BJ (cell line): ENCODE measurements at regions of chr1 and their contacts with region 1.

Region 1: DNA sequence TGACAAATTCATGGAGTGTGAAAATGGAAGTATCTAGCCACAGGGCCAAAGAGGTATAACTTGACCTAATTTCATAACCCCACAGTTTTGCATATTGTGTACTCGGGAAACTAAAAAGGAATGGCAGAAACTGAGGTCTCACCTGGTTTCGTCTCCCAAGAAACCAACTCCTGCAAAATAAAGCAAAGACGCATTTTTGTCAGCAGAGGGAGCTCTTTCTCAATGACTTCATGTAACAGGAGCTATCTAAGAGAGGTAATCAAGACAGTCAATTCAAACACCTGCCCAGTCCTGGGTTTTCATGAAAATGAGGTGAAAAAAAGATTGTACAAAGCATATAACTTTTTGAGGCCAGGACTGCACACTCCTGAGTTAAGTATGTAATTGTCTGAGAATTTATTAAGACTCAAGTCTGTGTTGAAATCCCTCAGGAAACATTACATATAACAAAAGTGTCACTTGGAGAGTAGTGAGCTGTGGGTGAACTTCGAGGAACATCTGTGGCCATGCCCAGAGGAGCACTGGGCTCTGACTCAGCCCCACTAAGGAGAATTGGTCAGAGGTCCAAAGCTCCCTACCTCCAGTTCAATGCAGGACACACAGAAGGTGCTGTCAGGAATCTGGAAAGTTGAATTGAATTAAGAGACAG is 17.6 kb downstream of the FCRL4 start:
- DNase-seq: peak; percentile 3
- H3K4me3 ChIP-seq: no peak overlapping the region
- H3K27me3 ChIP-seq: no peaks in the 10 kb centered on the region
- CTCF ChIP-seq: peak; percentile 65

Region 2: DNA sequence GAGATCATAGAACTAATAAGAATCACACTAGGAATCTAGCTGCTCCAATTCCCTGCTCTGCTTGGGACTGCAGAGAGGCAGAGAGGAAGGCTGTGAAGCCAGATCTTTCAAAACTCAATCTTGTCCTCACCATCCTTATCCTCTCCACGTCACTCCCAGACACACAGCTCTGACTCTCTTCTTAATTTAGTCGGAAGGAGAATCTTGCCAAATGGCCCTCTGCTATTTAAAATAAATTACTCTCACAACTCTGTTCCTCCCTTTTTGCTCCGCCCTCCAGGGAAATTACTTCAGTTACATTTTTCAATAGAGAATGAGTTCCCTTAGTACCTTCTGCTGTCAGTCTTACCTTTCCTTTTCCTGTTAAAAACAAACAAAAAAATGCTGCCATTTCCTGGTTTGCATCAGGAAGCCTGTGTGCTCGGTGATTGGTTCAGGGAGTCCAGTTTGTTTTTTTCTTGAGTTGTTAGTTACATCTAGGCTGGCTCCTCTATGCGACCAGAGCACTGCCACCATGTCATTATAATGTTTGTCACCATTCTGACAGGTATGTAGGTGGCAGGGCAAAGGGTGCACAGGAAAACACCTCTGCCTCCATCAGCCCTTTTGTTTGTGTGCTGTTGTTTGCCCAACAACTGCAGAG is 108.1 kb before region 1 on chr1:
- CTCF ChIA-PET with region 1: no interaction called
- POLR2A ChIA-PET with region 1: no interaction called
- DNase-seq: no peak
- H3K4me3 ChIP-seq: no peak overlapping the region
- H3K27me3 ChIP-seq: no peaks in the 10 kb centered on the region
- CTCF ChIP-seq: no peak

Region 3: GRCh38 chr1:157566484-157567300 is 13.6 kb before region 1 on chr1:
- CTCF ChIA-PET with region 1: interaction called, 14 read pairs
- POLR2A ChIA-PET with region 1: no interaction called
- DNase-seq: no peak
- H3K4me3 ChIP-seq: no peak overlapping the region
- H3K27me3 ChIP-seq: no peaks in the 10 kb centered on the region
- CTCF ChIP-seq: no peak

Region 4: DNA sequence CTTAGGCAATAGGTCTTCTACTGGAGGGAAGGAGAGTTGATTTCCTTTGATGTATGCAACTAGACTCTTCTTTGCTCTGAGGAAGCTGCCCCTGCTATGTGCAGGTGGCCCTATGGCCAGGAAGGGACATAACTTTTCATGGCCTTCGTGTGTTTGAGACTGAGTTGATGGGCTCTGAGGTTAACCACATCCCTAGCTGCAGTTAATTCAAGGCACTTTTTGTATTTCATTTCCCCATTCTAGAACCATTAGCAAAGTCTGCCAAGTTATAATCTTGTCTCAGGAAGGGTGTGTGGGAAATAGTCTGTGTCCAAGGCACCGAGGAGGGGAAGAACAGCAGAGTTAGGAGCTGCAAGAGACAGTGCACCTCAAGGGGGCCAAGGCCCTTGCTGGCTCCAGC is 15.1 kb after region 1 on chr1:
- CTCF ChIA-PET with region 1: interaction called, 11 read pairs
- POLR2A ChIA-PET with region 1: no interaction called
- DNase-seq: no peak
- H3K4me3 ChIP-seq: no peak overlapping the region
- H3K27me3 ChIP-seq: no peaks in the 10 kb centered on the region
- CTCF ChIP-seq: no peak

Region 5: GRCh38 chr1:157704878-157705277 is 124.6 kb after region 1 on chr1:
- CTCF ChIA-PET with region 1: no interaction called
- POLR2A ChIA-PET with region 1: no interaction called
- DNase-seq: no peak
- H3K4me3 ChIP-seq: no peak overlapping the region
- H3K27me3 ChIP-seq: peaks cover 3% of the 10 kb centered on the region; the same call in 1 of the 2 replicates
- CTCF ChIP-seq: no peak

Region 6: DNA sequence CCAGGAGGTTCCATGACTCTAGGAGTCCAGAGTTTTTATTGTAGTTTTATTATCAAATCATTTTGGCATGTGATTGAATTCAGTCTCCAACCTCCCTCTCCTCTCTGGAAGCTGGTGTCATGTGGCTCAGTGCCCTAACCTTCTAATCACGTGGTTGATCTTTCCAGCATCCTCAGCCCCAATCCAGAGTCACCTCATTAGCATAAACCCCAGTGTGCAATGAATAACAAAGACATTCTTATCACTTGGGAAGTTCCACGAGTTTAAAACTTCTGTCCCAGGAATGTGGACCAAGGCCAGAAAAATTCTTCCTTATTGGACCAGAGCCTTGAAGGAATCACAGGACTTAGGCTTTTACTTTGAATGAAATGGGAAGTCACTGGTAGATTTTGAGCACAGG is 465.3 kb after region 1 on chr1:
- CTCF ChIA-PET with region 1: no interaction called
- POLR2A ChIA-PET with region 1: no interaction called
- DNase-seq: peak; percentile 50
- H3K4me3 ChIP-seq: no peak overlapping the region
- H3K27me3 ChIP-seq: no peaks in the 10 kb centered on the region
- CTCF ChIP-seq: no peak

Region 7: DNA sequence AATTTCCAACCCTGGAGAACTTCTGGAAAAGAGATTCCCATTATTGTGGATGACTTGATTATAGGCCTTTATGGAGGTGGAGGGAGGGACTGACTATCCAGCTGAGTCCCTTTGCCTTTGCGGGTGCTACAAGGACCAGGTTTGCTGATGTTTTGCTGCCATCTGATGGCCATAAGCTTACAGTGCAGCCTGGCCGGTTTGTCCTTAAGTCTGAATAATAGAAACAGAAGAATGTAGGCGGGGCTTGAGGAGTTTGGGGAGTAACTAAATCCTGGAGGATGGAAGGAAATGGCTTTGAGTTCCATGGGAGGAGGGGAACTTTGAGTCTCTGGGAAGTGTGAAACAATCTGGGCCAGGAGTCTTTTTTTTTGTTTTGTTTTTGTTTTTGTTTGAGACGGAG is 544.7 kb after region 1 on chr1:
- CTCF ChIA-PET with region 1: interaction called, 25 read pairs
- POLR2A ChIA-PET with region 1: no interaction called
- DNase-seq: peak; percentile 73
- H3K4me3 ChIP-seq: no peak overlapping the region
- H3K27me3 ChIP-seq: peaks cover 7% of the 10 kb centered on the region
- CTCF ChIP-seq: peak; percentile 90